ENCODE measurements at regions of chr1 and their contacts with region 1.

Region 1: GRCh38 chr1:243850452-243851256 is 611 bp upstream of the AKT3 start:
- DNase-seq: peak; percentile 80
- H3K4me3 ChIP-seq: peak overlapping the region; percentile 36 to 71 (median 61)
- H3K27ac ChIP-seq: peak overlapping the region; percentile 93
- H3K4me1 ChIP-seq: peaks cover 17% of the 10 kb centered on the region
- H3K27me3 ChIP-seq: no peaks in the 10 kb centered on the region
- CTCF ChIP-seq: no peak
- POLR2A ChIP-seq: peak; percentile 28

Region 2: GRCh38 chr1:243748706-243749283 is 101.9 kb before region 1 on chr1:
- CTCF ChIA-PET with region 1: no interaction called
- POLR2A ChIA-PET with region 1: no interaction called
- dilution Hi-C with region 1: no loop called
- intact Hi-C with region 1: loop called (anchors 5 kb)
- DNase-seq: peak; percentile 79
- H3K4me3 ChIP-seq: no peak overlapping the region
- H3K27ac ChIP-seq: no peak overlapping the region
- H3K4me1 ChIP-seq: peaks cover 4% of the 10 kb centered on the region
- H3K27me3 ChIP-seq: no peaks in the 10 kb centered on the region
- CTCF ChIP-seq: peak; percentile 55 to 58
- POLR2A ChIP-seq: no peak

Region 3: DNA sequence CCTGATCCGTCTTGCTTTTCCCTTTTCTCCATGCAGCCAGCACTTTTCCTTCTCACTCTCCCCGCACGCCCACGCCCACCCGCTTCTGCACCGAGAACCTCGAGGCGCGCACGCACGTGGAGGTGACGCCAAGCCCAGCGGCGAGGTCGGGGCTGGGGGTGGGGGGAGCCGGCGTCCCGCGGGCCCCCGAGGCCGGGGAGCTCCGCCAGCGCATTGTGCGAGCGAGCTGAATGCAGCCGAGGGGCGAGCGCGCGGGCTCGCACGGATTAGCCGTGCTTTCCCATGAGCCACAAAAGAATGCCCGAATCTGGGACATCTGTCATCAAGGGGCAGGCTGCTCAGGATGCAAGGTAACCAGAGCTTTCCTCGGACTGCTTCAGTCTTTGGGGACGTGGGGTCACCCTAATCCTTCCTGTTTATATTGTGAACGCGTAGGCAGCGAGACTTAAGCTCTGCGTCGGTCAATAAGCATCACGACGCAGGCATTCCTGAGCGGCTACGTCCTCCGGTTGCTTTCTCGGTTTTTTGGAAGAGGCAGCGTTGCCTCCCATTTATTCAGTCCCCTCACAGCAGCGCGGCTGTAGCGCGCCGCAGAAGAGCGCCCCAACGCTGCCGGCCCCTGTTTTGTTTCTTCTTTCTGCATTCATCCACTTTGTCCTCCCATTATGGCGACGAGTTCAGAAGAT is 66.7 kb after region 1 on chr1:
- CTCF ChIA-PET with region 1: no interaction called
- POLR2A ChIA-PET with region 1: no interaction called
- dilution Hi-C with region 1: no loop called
- intact Hi-C with region 1: loop called (anchors 1 kb)
- DNase-seq: peak; percentile 79
- H3K4me3 ChIP-seq: peak overlapping the region; percentile 0 to 42 (median 17)
- H3K27ac ChIP-seq: peak overlapping the region; percentile 82
- H3K4me1 ChIP-seq: peaks cover 18% of the 10 kb centered on the region
- H3K27me3 ChIP-seq: no peaks in the 10 kb centered on the region
- CTCF ChIP-seq: no peak
- POLR2A ChIP-seq: no peak

Region 4: DNA sequence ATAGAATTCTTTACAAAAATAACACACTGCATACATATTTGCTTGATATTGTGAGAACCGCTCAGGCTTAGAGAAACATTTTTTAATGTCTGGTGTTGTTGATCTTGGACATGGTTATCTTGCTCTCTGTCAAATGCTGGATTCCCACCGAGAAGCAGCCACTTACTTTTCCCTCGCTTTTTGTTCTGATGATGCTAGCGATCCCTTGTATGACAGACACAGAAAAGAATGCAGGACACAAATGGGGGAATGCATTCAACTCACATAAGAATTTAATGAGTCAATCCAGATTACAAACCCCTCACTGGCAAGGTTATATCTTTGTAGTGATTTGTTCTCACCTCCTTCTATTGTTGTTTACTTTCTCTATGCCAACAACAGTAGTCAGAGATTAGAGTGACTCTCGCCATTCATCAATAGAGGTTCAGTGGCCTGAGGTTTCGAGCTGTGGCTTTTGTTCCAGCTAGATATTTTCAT is 76.2 kb after region 1 on chr1:
- CTCF ChIA-PET with region 1: no interaction called
- POLR2A ChIA-PET with region 1: interaction called, 4 read pairs
- dilution Hi-C with region 1: no loop called
- intact Hi-C with region 1: loop called (anchors 1 kb)
- DNase-seq: peak; percentile 96
- H3K4me3 ChIP-seq: peak overlapping the region in 1 of 3 experiments; percentile 1
- H3K27ac ChIP-seq: peak overlapping the region; percentile 78
- H3K4me1 ChIP-seq: peaks cover 37% of the 10 kb centered on the region
- H3K27me3 ChIP-seq: no peaks in the 10 kb centered on the region
- CTCF ChIP-seq: no peak
- POLR2A ChIP-seq: peak; percentile 64

Region 5: GRCh38 chr1:244214009-244214967 is 363.6 kb after region 1 on chr1:
- CTCF ChIA-PET with region 1: no interaction called
- POLR2A ChIA-PET with region 1: no interaction called
- dilution Hi-C with region 1: no loop called
- intact Hi-C with region 1: loop called (anchors 2 kb)
- DNase-seq: peak; percentile 98
- H3K4me3 ChIP-seq: no peak overlapping the region
- H3K27ac ChIP-seq: peak overlapping the region; percentile 84
- H3K4me1 ChIP-seq: peaks cover 16% of the 10 kb centered on the region
- H3K27me3 ChIP-seq: no peaks in the 10 kb centered on the region
- CTCF ChIP-seq: no peak
- POLR2A ChIP-seq: peak; percentile 27

Region 6: GRCh38 chr1:244445320-244446181 is 594.9 kb after region 1 on chr1:
- CTCF ChIA-PET with region 1: no interaction called
- POLR2A ChIA-PET with region 1: no interaction called
- dilution Hi-C with region 1: no loop called
- intact Hi-C with region 1: loop called (anchors 10 kb)
- DNase-seq: peak; percentile 45
- H3K4me3 ChIP-seq: no peak overlapping the region
- H3K27ac ChIP-seq: peak overlapping the region; percentile 46
- H3K4me1 ChIP-seq: peaks cover 61% of the 10 kb centered on the region
- H3K27me3 ChIP-seq: no peaks in the 10 kb centered on the region
- CTCF ChIP-seq: no peak
- POLR2A ChIP-seq: no peak